ENCODE measurements at regions of chr6 and their contacts with region 1.

Region 1: DNA sequence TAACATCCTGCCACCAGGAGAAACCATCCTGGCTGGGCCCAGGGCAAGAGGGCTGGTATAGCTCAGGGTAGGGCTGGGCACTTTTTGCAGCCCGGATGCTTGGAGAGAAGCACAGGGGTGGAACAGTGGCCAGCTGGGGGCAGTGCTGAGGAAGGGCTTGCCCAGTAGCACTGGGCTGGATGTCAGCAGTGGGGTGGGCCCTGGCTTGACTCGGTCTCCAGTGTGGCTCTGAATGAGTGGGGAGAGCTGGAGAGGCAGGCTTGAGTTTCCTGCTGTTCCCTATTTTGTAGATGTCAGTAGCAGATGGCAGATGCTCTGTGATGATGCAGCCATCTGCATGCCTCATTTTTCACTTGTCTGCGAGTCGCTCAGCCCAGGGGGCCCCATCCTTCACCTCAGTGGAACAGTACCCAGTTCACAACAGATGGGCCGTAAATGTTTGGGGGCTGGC is 56.3 kb upstream of the TULP1 start:
- DNase-seq: peak; percentile 34
- CTCF ChIP-seq: peak; percentile 33

Region 2: DNA sequence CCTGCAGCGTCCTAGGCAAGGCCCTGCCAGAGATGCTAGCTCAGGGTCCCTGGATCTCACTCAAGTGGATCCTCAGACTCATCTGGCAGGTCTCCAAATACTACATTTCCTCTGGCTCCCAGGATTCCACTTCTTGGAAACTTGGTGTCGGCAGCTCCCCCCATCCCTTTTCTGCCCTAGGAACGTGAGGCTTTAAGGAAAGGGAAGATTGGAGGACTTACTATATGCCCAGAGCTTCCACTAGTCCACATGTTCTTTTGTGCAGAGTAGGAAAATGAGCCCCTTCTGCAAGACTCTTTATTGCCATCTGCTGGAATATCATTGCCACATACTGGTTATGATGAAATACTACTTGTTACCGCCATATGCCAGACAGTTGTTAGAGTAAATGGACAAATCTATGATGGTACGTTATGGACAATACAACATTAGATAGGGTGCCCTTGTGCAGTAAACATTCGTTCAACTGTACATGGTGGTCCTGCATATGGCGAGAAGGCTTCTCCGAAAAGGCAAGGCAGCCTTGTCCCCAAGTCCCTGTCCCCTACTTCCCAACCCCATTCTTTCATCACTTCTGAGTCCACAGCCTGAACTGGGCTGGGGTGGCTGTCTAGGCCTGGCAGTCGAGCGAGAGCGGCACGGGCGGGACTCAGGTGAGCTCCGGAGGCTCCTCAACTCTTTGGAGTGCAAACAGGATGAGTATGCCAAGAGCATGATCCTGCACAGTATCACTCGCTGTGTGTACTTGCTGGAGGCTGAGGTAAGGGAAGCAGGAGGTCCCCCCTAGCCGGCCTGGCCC is 168.6 kb after region 1 on chr6:
- CTCF ChIA-PET with region 1: interaction called, 11 read pairs
- POLR2A ChIA-PET with region 1: interaction called, 5 read pairs
- DNase-seq: peak; percentile 82
- CTCF ChIP-seq: peak; percentile 64

Measured in GM10248 (cell line).